ENCODE measurements at regions of chr4 and their contacts with region 1.

Region 1: DNA sequence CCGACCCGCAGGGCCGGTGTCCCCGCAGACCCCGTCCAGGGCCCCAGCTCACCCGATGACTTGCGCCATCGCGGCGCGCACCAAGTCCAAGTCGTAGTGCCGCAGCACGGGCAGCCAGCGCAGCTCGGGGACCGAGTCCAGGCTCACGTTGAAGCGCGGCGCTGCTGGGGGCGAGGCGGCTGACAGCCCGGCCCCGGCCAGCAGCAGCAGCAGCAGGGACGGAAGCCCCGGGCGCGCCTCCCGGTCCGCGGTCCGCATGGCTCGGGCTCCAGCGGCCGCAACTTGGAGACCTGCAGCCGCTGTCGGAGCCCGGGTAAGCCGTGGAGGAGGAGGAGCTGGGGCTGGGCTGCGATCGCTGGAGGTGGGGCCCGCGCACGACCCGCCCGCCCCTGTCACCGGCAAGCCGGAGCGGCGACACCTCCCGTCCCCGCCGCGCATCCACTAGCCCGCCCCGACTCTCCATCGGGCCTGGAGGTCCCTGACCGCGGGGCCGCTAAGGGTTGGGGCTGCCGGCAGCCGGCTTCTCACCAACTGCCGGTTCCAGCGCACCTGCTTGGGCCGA is at the start of gene NAAA:
- DNase-seq: peak; percentile 88
- ATAC-seq: peak; percentile 83
- H3K4me3 Mint-ChIP-seq: peak within 1 kb of the TSS; percentile 97
- H3K27ac Mint-ChIP-seq: peak within 1 kb of the TSS; percentile 97
- H3K4me1 Mint-ChIP-seq: peaks cover 13% of the 10 kb centered on the region
- H3K27me3 Mint-ChIP-seq: no peaks in the 10 kb centered on the region
- total RNA-seq, gene NAAA: 48.3 to 50.5 TPM

Region 2: DNA sequence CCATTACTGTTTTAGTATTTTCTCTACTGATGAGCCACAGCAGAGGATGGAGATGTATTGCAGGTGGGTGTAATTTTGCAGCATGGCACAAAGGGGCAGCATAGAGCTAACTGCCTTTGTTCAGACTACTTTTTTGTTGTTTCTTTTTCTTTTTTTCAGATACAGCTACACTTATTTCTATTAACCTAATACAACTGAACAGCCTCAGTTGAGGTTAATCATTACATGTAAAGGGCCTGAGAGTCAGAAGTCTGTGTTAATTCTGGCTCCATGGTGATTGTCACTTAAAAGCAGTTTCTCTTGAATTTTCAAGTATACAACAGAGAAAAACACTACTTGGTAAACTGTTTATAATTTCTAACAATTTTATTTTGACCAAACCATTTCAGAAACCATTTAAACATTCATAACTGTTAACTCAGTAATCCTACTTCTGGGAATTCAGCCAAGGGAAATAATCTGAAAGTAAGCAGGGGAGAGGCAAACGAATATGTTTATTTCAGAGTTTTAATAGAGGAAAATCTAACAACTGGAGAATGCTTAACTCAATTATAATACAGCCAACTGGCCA is 24.6 kb before region 1 on chr4:
- POLR2A ChIA-PET with region 1: interaction called, 12 read pairs
- DNase-seq: no peak
- ATAC-seq: peak; percentile 72
- H3K4me3 Mint-ChIP-seq: no peak overlapping the region
- H3K27ac Mint-ChIP-seq: peak overlapping the region; percentile 61
- H3K4me1 Mint-ChIP-seq: no peaks in the 10 kb centered on the region
- H3K27me3 Mint-ChIP-seq: no peaks in the 10 kb centered on the region

Region 3: DNA sequence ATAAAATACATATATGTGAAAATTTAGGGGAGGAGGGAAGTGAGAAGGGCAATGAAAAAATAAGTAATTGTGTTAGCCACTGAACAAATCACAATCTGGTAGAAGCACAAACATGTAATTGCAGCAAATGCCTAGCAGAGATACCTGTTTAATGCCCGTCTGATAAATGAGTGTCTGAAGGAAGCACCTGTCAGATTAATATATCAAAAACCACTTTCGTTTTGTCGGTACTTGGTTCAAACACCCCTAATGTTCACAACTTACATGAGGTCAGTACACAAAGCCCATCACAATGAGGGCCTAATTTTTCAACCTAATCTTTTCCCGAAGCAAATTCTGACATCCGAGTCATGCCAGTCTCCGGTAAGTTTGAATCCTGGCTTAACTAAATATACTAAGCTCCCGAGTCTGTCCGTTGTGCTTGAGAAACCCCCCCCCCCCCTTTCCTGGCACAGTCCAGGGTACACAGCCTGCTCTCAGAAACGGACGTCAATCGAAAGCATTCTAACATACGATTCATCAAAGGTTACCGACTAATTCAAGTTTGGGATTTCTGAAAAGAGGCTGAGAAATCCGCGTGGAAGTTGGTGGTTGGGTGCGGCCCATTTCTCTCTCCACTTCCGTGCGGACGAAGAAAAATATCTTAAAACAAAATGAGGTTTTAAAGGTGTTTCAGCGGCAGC is 49.2 kb after region 1 on chr4:
- POLR2A ChIA-PET with region 1: interaction called, 17 read pairs
- DNase-seq: no peak
- ATAC-seq: no peak
- H3K4me3 Mint-ChIP-seq: peak overlapping the region; percentile 88
- H3K27ac Mint-ChIP-seq: peak overlapping the region; percentile 84
- H3K4me1 Mint-ChIP-seq: peaks cover 25% of the 10 kb centered on the region
- H3K27me3 Mint-ChIP-seq: peaks cover 3% of the 10 kb centered on the region

Region 4: GRCh38 chr4:76002176-76002575 is 61.4 kb after region 1 on chr4:
- POLR2A ChIA-PET with region 1: no interaction called
- DNase-seq: no peak
- ATAC-seq: no peak
- H3K4me3 Mint-ChIP-seq: no peak overlapping the region
- H3K27ac Mint-ChIP-seq: no peak overlapping the region
- H3K4me1 Mint-ChIP-seq: peaks cover 11% of the 10 kb centered on the region
- H3K27me3 Mint-ChIP-seq: peaks cover 11% of the 10 kb centered on the region

Measured in activated naive CD8-positive, alpha-beta T cell treated with anti-CD3 and anti-CD28 coated beads, Interleukin-2, amount 10 ng/mL, durations not matched to agents 7 days and 5 days (primary cell).